ENCODE measurements at regions of chr4 and their contacts with region 1.

Region 1: DNA sequence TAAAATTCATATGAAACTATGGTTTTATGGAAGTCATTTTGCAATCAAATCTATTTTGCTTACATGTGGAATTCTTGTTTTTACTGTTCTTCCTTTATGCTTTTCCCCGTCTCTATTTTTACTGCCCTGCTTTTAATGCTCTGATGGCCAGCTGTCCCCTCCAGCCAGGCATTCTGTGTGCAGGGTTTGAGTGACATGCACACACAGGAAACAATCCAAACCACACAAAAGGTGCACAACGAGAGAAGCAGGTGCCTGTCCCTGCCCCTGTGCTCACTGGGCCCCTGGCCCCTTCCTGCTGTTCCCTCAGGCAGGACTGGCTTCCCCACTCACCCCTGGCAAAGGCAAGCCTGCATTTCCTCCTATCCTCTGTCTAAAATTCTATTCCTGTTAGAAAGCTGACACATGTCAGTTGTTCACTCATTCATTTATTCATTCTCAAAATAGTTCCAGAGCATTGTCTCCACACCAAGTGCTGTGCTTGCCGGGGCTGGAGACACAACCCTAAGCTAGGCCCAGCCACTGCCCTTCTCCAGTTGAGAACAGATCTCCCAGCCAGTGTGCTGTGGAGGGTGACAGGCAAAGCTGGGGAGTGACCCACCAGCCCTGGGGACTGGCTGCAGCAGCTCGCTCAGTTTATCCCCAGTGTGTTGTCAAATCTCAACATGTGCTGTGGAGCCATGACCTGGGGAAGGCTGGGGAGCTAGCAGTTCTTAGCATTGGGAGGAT is 346.3 kb downstream of the FBXW7 start:
- DNase-seq: no peak
- ATAC-seq: no peak
- H3K4me3 ChIP-seq: no peak overlapping the region
- H3K4me3 Mint-ChIP-seq: no peak overlapping the region
- H3K27ac ChIP-seq: no peak overlapping the region
- H3K27ac Mint-ChIP-seq: no peak overlapping the region
- H3K4me1 ChIP-seq: peaks cover 6% of the 10 kb centered on the region
- H3K4me1 Mint-ChIP-seq: peaks cover 21% of the 10 kb centered on the region
- H3K27me3 ChIP-seq: no peaks in the 10 kb centered on the region
- H3K27me3 Mint-ChIP-seq: no peaks in the 10 kb centered on the region
- CTCF ChIP-seq: no peak

Region 2: DNA sequence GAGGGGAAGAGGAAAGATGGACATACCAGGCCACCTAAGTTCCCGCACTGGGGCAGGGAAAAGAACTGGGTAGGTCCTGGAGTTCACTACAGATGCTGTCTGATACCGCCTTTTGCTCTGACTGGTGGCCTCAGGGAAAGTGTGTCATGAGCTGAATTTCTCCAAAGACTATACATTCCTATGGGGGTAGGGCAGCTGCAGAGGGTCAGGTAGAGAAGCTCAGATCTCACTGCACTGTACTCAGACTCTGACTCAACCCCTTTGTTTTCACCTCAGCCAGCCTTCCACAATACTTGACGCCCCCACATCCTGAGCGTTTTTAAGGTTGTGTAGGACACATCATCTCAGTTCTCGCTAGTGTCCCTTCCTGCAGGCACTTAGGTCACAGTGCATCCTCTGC is 436.6 kb before region 1 on chr4:
- CTCF ChIA-PET with region 1: no interaction called
- POLR2A ChIA-PET with region 1: no interaction called
- intact Hi-C with region 1: no loop called
- DNase-seq: no peak
- ATAC-seq: no peak
- H3K4me3 ChIP-seq: no peak overlapping the region
- H3K4me3 Mint-ChIP-seq: no peak overlapping the region
- H3K27ac ChIP-seq: no peak overlapping the region
- H3K27ac Mint-ChIP-seq: no peak overlapping the region
- H3K4me1 ChIP-seq: no peaks in the 10 kb centered on the region
- H3K4me1 Mint-ChIP-seq: no peaks in the 10 kb centered on the region
- H3K27me3 ChIP-seq: no peaks in the 10 kb centered on the region
- H3K27me3 Mint-ChIP-seq: no peaks in the 10 kb centered on the region
- CTCF ChIP-seq: no peak

Region 3: GRCh38 chr4:152352622-152353116 is 163.1 kb after region 1 on chr4:
- CTCF ChIA-PET with region 1: no interaction called
- POLR2A ChIA-PET with region 1: no interaction called
- intact Hi-C with region 1: loop called in 1 of 2 experiments (anchors 5 kb)
- DNase-seq: peak in 6 of 9 experiments; percentile 1 to 62 (median 40)
- ATAC-seq: peak; percentile 89
- H3K4me3 ChIP-seq: peak overlapping the region in 1 of 2 experiments; percentile 19
- H3K4me3 Mint-ChIP-seq: peak overlapping the region; percentile 15
- H3K27ac ChIP-seq: no peak overlapping the region
- H3K27ac Mint-ChIP-seq: peak overlapping the region; percentile 11
- H3K4me1 ChIP-seq: peaks cover 14% of the 10 kb centered on the region
- H3K4me1 Mint-ChIP-seq: peaks cover 26% of the 10 kb centered on the region
- H3K27me3 ChIP-seq: no peaks in the 10 kb centered on the region
- H3K27me3 Mint-ChIP-seq: no peaks in the 10 kb centered on the region
- CTCF ChIP-seq: no peak

Measured in CD8-positive, alpha-beta T cell (primary cell).